PC-9 (cell line): ENCODE measurements at regions of chr7 and their contacts with region 1.

Region 1: GRCh38 chr7:101402088-101402779 is 39.6 kb downstream of the COL26A1 start:
- DNase-seq: peak; percentile 71 to 81
- H3K4me3 ChIP-seq: peak overlapping the region; percentile 19; the same call in 1 of the 2 replicates
- H3K27ac ChIP-seq: no peak overlapping the region
- H3K4me1 ChIP-seq: peaks cover 14% of the 10 kb centered on the region
- H3K27me3 ChIP-seq: peaks cover 16% of the 10 kb centered on the region; the same call in 1 of the 2 replicates
- CTCF ChIP-seq: no peak

Region 2: GRCh38 chr7:101342892-101343291 is 59.3 kb before region 1 on chr7:
- CTCF ChIA-PET with region 1: no interaction called
- POLR2A ChIA-PET with region 1: no interaction called
- intact Hi-C with region 1: no loop called
- DNase-seq: no peak
- H3K4me3 ChIP-seq: no peak overlapping the region
- H3K27ac ChIP-seq: no peak overlapping the region
- H3K4me1 ChIP-seq: no peaks in the 10 kb centered on the region
- H3K27me3 ChIP-seq: peaks cover 14% of the 10 kb centered on the region; the same call in 1 of the 2 replicates
- CTCF ChIP-seq: no peak

Region 3: DNA sequence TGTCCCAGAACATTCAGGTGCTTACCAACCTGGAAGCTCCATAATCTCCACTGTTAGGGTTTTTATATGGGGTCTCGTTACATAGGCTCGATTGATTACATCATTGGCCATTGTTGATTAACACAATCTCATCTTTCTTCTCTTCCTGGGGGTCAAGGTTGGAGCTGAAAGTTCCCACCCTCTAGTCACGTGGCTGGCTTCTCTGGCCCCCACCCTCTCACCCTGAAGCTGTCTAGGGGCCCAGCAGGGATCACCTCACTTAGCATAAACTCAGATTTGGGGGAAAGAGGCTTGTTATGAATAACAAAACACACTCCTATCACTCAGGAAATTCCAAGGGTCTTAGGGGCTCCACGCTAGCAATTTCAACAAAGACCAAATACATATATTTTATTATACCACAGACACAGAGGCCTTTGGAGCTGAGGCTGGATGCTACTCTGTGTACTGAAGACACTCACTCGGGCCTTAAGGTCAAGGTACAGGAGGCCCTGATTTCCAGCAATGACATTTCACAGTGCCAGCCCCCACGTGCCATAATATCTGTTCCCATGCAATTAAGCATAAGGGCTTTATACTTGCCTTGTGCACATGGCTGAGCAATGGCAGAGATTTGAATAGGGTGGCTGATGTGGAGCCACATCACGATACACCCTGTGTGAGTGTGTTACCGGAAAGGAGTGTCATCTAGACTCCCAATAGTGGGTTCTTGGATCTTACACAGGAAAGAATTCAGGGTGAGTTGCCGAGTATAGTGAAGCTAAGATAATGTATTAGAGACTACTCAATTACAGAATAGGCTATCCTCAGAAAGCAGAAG is 68.6 kb after region 1 on chr7:
- CTCF ChIA-PET with region 1: no interaction called
- POLR2A ChIA-PET with region 1: interaction called, 42 read pairs
- intact Hi-C with region 1: no loop called
- DNase-seq: no peak
- H3K4me3 ChIP-seq: no peak overlapping the region
- H3K27ac ChIP-seq: no peak overlapping the region
- H3K4me1 ChIP-seq: no peaks in the 10 kb centered on the region
- H3K27me3 ChIP-seq: peaks cover 54% of the 10 kb centered on the region
- CTCF ChIP-seq: no peak

Region 4: DNA sequence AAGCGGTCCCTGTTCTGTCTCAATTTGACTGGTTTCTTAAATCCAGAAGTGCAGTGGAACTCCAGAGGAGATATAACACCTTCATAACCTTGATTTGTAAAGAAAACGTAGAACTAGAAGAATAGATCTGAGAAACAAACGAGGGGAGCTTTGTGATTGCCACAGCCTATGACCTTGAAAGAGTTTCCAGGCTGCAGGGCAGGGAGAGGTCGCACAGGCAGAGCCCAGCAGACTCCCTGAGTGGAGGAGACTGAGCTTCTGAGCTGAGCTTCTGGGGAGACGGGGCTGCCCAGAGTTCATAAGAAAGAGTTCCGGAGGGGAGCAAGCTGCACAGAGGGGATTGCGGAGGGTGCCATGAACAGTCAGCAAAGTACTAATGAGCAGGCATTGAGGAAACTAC is 1404.4 kb after region 1 on chr7:
- CTCF ChIA-PET with region 1: no interaction called
- POLR2A ChIA-PET with region 1: no interaction called
- intact Hi-C with region 1: no loop called
- DNase-seq: no peak
- H3K4me3 ChIP-seq: no peak overlapping the region
- H3K27ac ChIP-seq: no peak overlapping the region
- H3K4me1 ChIP-seq: no peaks in the 10 kb centered on the region
- H3K27me3 ChIP-seq: no peaks in the 10 kb centered on the region
- CTCF ChIP-seq: no peak